Activated CD4-positive, alpha-beta memory T cell treated with anti-CD3 and anti-CD28 coated beads for 36 hours (primary cell): ENCODE measurements at regions of chr3 and their contacts with region 1.

Region 1: DNA sequence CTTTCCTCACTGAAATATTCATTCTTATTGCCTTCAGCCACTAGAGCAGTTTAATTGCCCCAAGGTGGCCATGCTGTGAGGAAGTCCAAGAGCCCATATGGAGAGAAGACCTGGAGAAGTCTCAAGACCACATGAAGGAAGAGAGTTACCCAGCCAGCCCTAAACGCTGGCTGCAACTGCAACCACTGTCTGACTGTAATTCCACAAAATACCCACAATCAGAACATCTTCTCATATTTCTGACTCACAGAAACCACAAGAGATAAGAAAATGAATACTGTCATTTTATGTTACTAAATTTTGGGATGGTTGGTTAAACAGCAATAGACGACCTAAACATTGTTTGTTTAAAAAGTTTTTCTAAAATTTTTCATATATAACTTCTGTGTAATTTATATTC is 14.7 kb upstream of the SST start:
- DNase-seq: peak; percentile 18
- H3K4me3 Mint-ChIP-seq: no peak overlapping the region
- H3K27ac Mint-ChIP-seq: no peak overlapping the region
- H3K4me1 Mint-ChIP-seq: peaks cover 3% of the 10 kb centered on the region
- H3K27me3 Mint-ChIP-seq: peaks cover 39% of the 10 kb centered on the region

Region 2: GRCh38 chr3:187669675-187670504 is 15.0 kb before region 1 on chr3 and contains the start of gene SST:
- CTCF ChIA-PET with region 1: interaction called, 117 read pairs
- POLR2A ChIA-PET with region 1: no interaction called
- intact Hi-C with region 1: loop called (anchors 2 kb)
- DNase-seq: peak; percentile 49
- H3K4me3 Mint-ChIP-seq: no peak within 1 kb of the TSS
- H3K27ac Mint-ChIP-seq: no peak within 1 kb of the TSS
- H3K4me1 Mint-ChIP-seq: peaks cover 6% of the 10 kb centered on the region
- H3K27me3 Mint-ChIP-seq: peaks cover 65% of the 10 kb centered on the region
- total RNA-seq, gene SST: not detected